PC-9 (cell line): ENCODE measurements at regions of chr22 and their contacts with region 1.

Region 1: DNA sequence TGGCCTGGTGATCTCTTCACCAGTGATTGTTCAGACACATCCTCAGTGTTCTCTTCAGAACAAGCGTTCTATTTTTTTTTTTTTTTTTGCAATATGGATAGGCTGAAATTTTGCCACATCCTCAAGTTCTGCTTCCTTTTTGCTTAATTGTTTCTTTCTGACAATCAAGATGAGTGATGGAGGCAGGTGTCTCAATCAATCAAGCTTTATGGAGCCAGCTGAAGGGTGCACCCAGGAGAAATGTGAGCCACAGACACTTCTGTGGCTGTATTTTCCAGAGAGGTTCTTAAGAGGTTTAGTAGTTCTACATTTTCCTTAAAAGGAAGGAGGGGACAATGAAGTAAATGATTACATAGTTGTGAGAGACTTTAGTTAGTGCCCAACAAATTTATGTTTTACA is 43.9 kb upstream of the ASPHD2 start:
- DNase-seq: no peak
- H3K4me3 ChIP-seq: no peak overlapping the region
- H3K27ac ChIP-seq: no peak overlapping the region
- H3K4me1 ChIP-seq: no peaks in the 10 kb centered on the region
- H3K27me3 ChIP-seq: peaks cover 65% of the 10 kb centered on the region
- CTCF ChIP-seq: no peak

Region 2: DNA sequence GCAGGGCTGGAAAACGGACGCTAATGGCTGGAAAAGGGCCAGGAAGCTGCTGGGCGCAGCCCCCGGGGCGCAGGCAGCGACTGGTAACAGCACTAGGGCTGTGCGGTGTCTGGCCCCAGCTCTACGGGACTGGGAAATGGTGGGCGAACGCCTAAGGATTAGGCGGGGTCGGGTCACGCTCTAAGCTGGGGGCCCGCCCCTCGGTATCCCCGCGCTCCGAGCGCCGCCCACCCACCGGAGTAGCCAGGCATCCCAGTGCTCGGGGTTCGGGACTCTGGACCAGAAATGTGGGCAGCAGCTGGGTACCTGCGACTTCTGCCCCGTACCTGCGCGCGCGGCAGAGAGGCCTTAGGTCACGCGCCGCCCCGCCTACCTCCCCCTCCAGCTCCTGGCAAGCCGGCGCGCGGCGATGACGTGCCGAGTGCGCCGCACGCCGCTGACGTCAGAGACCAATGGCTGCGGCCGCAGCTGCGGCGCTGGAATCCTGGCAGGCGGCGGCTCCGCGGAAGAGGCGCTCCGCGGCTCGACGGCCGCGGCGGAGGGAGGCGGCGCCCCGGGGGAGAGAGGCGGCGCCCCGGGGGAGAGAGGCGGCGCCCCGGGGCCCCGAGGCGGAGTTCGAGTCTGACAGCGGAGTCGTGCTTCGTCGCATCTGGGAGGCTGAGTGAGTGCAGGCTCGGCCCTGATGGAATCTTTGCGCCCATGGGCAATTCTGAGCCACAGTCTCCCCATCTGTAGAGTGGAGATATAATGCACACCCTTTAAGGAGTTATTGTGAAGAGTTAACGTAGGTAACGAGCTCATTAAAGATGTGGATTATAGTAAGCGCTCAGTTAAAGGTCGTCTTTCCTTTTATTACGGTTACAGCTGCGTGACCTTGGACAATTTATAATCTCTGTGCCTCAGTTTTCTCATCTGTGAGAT is 98.5 kb after region 1 on chr22 and contains the starts of genes HPS4 and SRRD:
- CTCF ChIA-PET with region 1: no interaction called
- POLR2A ChIA-PET with region 1: interaction called, 10 read pairs
- intact Hi-C with region 1: no loop called
- DNase-seq: peak; percentile 72 to 79
- H3K4me3 ChIP-seq: peak within 1 kb of the TSS; percentile 81
- H3K27ac ChIP-seq: peak within 1 kb of the TSS; percentile 63
- H3K4me1 ChIP-seq: peaks cover 23% of the 10 kb centered on the region
- H3K27me3 ChIP-seq: no peaks in the 10 kb centered on the region
- CTCF ChIP-seq: no peak
- total RNA-seq, gene HPS4: 21.2 and 33.1 TPM in 2 replicates
- total RNA-seq, gene SRRD: 7.1 and 9.5 TPM in 2 replicates

Region 3: DNA sequence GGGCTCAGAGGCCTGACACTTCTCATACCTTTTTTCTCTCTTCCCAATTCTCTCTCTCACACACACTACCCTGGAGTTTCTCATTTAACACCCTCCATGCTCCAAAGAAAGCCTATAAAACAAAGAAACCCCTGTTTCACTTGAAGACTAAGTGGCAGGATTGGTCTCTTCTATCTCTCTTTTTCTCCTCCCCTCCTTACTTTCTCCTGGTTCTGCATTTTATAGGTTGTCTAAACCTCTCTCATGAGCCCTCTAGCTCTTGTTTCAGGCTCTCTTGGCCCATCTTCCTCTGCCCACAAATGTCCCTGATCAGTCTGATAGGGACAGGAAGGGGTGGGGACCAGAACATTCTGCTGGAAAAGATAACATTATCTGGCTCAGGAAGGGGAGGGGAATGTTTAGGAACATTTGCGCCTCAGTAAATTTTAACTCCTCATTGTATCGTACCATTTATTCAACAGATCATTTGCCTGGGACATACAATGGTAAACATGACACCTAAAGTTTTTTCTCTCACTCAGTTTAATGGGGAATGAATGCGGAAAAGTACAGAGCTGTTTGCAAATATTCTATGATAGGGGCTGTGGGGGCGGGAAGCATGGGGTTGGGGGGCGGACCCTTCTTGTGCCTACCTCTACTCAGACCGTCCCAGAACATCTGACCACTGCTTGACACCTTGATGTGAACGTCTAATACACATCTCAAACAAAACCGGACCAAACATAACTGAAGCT is 247.4 kb after region 1 on chr22:
- CTCF ChIA-PET with region 1: no interaction called
- POLR2A ChIA-PET with region 1: interaction called, 10 read pairs
- intact Hi-C with region 1: no loop called
- DNase-seq: no peak
- H3K4me3 ChIP-seq: no peak overlapping the region
- H3K27ac ChIP-seq: no peak overlapping the region
- H3K4me1 ChIP-seq: no peaks in the 10 kb centered on the region
- H3K27me3 ChIP-seq: peaks cover 34% of the 10 kb centered on the region; the same call in 1 of the 2 replicates
- CTCF ChIP-seq: no peak